ENCODE measurements at regions of chr6 and their contacts with region 1.

Region 1: DNA sequence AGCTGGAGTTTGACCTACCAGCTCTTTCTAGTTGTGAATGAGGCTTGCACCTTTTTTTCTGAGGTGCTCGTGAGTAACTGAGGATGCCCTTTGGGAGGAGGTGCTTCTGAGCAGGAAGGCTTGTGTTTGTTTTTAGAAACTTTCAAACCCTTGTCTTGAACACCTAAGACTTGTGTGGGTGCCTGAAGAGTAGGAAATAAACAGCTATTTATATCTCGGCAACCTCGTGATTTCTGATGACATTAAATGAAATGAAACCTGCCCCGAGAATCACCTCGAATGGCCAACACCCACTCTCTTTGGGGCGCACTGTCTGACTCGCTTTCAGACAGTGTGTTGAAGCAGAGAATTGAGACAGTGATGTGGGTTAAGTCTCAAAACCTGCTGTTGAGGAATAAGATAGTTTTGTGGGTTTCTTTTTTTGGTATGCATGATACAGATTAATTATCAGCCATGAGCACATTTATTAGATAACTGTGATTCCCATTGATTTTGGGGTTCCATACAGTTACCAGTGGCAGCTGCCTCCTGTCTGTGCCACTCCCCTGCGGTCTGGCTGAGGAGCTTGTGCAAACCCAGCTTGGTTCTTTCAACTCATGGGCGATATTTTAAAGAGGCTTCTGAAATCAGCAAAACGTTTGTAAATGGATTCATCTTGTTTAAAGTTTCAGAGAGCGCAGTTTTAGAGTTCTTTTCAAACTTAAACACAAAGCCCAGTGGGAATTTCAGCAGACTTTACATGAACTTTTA is 8.4 kb downstream of the IRF4 start:
- DNase-seq: peak; percentile 73
- H3K4me3 Mint-ChIP-seq: peak overlapping the region; percentile 56
- H3K27ac Mint-ChIP-seq: peak overlapping the region; percentile 89
- H3K4me1 Mint-ChIP-seq: peaks cover 91% of the 10 kb centered on the region
- H3K27me3 Mint-ChIP-seq: no peaks in the 10 kb centered on the region

Region 2: GRCh38 chr6:364609-365540 is 35.1 kb before region 1 on chr6:
- CTCF ChIA-PET with region 1: no interaction called
- intact Hi-C with region 1: no loop called
- DNase-seq: no peak
- H3K4me3 Mint-ChIP-seq: no peak overlapping the region
- H3K27ac Mint-ChIP-seq: no peak overlapping the region
- H3K4me1 Mint-ChIP-seq: no peaks in the 10 kb centered on the region
- H3K27me3 Mint-ChIP-seq: peaks cover 2% of the 10 kb centered on the region

Region 3: DNA sequence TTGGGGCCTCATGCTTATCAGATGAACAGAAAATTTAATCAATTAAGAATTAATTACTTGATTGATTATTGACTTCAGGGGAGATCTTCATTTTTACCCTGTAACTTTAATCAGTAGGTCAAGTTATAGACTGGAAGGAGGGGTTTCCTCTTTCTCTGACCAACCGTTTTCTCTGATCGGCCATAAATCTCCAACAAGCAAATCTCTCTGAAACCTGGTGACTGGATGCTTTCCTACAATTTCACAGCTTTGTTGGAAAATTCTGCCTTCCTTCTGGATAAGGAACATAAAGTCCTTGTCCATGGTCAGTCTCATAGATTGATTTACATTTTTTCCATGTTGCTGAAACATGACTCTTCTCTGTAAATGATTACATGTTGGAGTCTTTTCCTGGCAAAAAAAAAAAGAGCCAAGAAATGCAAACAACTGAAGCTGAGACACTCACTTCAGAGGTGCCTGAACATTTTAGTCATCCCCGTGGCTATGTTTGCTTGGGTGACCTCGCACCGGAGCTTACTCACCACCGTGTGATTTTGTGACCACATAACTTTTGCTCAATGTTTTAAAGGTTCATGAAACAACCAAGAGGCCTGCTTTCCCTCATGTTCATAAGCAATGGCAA is 22.6 kb after region 1 on chr6:
- CTCF ChIA-PET with region 1: interaction called, 7 read pairs
- intact Hi-C with region 1: loop called (anchors 1 kb)
- DNase-seq: peak; percentile 91
- H3K4me3 Mint-ChIP-seq: no peak overlapping the region
- H3K27ac Mint-ChIP-seq: peak overlapping the region; percentile 81
- H3K4me1 Mint-ChIP-seq: peaks cover 31% of the 10 kb centered on the region
- H3K27me3 Mint-ChIP-seq: no peaks in the 10 kb centered on the region

Region 4: DNA sequence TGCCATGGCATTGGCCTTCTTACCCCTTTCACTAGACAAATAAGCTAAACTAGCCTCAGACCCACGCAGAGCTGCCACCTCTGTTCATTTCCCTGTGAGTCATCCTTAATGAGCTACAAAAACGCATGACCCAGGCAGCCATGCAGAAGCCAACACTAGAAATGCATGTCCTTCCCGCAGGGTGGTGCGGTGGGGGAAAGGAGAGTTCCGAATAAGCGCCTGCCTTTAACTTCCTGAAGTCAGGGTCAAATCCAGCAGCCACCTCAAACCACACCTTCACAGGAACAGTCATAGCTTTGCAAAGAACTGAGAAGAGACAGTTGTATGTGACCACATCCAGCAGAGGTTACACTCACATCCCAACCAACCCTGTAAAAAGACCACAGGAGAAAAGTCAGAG is 32.0 kb after region 1 on chr6:
- CTCF ChIA-PET with region 1: interaction called, 3 read pairs
- intact Hi-C with region 1: loop called (anchors 1 kb)
- DNase-seq: peak; percentile 88
- H3K4me3 Mint-ChIP-seq: no peak overlapping the region
- H3K27ac Mint-ChIP-seq: no peak overlapping the region
- H3K4me1 Mint-ChIP-seq: peaks cover 60% of the 10 kb centered on the region
- H3K27me3 Mint-ChIP-seq: no peaks in the 10 kb centered on the region

Measured in activated naive CD4-positive, alpha-beta T cell treated with anti-CD3 and anti-CD28 coated beads for 36 hours (primary cell).